Dendritic cell treated with granulocyte-macrophage colony-stimulating factor and Interleukin-4, amounts not matched to agents 40 ng/mL and 50 ng/mL, for 4 days (primary cell): ENCODE measurements at regions of chr1 and their contacts with region 1.

Region 1: GRCh38 chr1:91282695-91283420 is 121.8 kb downstream of the HFM1 start:
- H3K4me3 Mint-ChIP-seq: no peak overlapping the region
- H3K27ac Mint-ChIP-seq: no peak overlapping the region
- H3K4me1 Mint-ChIP-seq: no peaks in the 10 kb centered on the region
- H3K27me3 Mint-ChIP-seq: no peaks in the 10 kb centered on the region

Region 2: GRCh38 chr1:91075233-91076135 is 207.4 kb before region 1 on chr1:
- intact Hi-C with region 1: no loop called
- H3K4me3 Mint-ChIP-seq: no peak overlapping the region
- H3K27ac Mint-ChIP-seq: no peak overlapping the region
- H3K4me1 Mint-ChIP-seq: peaks cover 13% of the 10 kb centered on the region
- H3K27me3 Mint-ChIP-seq: no peaks in the 10 kb centered on the region

Region 3: DNA sequence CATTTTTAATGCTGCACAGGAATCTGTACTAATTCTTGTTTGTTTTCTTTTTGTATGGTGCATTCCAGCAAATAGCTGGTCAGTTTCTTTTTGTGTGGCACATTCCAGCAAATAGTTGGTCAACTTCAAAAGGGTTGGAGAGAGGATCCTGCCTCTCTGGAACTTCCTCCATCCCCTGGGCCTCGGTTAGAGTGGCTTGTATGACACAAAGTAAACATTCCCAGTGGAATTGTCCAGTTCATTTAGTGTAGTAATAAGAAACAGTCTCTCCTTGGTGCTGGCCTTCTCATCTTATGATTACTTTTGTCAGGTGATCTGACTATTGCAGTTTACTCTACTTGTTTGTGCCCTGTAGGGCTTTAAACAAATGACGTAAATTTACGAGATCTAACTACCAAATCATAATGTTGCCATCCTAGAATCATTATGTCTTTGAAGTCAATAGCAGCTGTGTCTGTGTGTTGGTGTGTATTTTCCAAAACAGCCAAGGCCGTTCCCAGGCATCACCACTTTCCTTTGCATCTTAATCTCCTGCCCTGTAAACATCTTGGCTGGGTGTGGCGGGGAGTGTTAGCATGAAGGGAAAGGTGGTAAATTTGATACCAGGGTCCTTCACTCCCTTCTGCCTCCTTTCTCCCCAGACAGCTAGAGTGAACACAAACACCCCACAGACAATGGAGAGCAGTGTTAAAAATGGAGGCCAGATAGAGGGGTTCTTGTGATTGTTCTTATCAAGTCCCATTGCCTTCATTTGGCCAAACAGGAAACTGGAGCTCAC is 295.7 kb after region 1 on chr1:
- intact Hi-C with region 1: no loop called
- H3K4me3 Mint-ChIP-seq: no peak overlapping the region
- H3K27ac Mint-ChIP-seq: no peak overlapping the region
- H3K4me1 Mint-ChIP-seq: peaks cover 6% of the 10 kb centered on the region
- H3K27me3 Mint-ChIP-seq: peaks cover 54% of the 10 kb centered on the region

Region 4: GRCh38 chr1:91803847-91804545 is 521.1 kb after region 1 on chr1:
- intact Hi-C with region 1: no loop called
- H3K4me3 Mint-ChIP-seq: no peak overlapping the region
- H3K27ac Mint-ChIP-seq: no peak overlapping the region
- H3K4me1 Mint-ChIP-seq: peaks cover 18% of the 10 kb centered on the region
- H3K27me3 Mint-ChIP-seq: no peaks in the 10 kb centered on the region

Region 5: GRCh38 chr1:91929250-91929649 is 646.4 kb after region 1 on chr1:
- intact Hi-C with region 1: loop called (anchors 2 kb)
- H3K4me3 Mint-ChIP-seq: no peak overlapping the region
- H3K27ac Mint-ChIP-seq: no peak overlapping the region
- H3K4me1 Mint-ChIP-seq: no peaks in the 10 kb centered on the region
- H3K27me3 Mint-ChIP-seq: no peaks in the 10 kb centered on the region